Activated T-helper 2 cell treated with anti-CD3 and anti-CD28 coated beads, Interferon-gamma antibody, Interleukin-2, Interleukin-4, amounts not matched to agents 10 μg/mL and 5 μg/mL and 100 μg/mL, durations not matched to agents 14 hours and 24 hours and 36 hours (primary cell): ENCODE measurements at regions of chr9 and their contacts with region 1.

Region 1: DNA sequence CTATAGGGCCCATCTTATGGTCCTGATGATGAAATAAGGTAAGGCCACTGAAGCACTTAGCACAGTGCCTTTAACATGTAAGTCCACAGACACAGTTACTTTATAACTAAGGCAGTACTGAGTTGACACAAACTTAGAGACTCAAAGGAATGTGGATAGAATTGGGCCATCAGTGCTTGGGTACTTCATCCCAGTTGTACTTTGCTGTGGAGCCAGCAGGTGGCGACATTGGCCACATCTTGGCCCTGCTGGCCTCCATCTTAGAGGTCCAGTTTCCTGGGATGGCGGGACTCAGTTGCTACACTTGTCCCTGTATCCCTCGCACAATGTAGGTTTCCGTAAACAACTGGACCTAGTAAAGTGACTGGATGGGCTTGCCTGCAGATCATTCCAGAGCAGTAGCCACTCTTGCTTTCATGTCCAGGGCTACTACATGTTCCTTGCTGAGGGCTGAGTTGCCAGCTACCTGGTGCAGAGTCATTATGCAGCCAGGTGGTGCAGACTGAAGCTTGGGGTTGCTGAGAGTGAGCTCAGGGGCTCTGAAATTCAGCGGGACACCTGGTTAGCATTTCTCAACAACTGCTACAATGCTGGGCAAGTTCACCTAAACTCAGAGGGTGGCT is 10.6 kb downstream of the MTAP start:
- DNase-seq: peak; percentile 49
- H3K4me3 Mint-ChIP-seq: no peak overlapping the region
- H3K27ac Mint-ChIP-seq: no peak overlapping the region
- H3K4me1 Mint-ChIP-seq: peaks cover 39% of the 10 kb centered on the region
- H3K27me3 Mint-ChIP-seq: no peaks in the 10 kb centered on the region

Region 2: DNA sequence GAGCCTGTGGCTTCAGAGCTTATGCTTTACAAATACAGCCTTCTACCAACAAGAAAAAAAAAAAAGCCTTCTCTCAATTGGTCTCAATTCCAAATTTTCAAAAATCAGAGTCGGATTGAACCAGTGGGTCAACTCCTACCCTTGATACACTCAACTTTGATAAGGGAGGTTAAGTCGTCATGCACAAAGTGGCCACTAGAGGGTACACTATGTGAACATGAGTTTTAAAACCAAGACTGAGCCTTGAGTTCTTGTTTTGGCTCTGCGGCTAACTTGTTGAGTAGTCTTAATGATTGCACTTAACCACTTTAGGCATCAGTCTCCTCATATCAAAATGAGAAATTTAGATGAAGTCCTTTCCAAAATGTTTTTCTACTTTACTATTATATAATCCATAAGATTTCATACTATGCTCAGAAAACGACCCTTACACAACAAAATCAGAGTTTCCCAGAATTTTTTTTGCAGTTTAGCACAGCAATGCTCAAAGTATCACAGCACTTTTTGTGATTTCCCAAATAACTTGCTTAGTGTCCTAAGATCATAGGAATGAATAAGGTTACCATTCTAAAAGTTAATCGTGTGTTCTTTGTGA is 103.5 kb before region 1 on chr9:
- intact Hi-C with region 1: no loop called
- DNase-seq: peak; percentile 41
- H3K4me3 Mint-ChIP-seq: no peak overlapping the region
- H3K27ac Mint-ChIP-seq: no peak overlapping the region
- H3K4me1 Mint-ChIP-seq: peaks cover 4% of the 10 kb centered on the region
- H3K27me3 Mint-ChIP-seq: peaks cover 24% of the 10 kb centered on the region

Region 3: GRCh38 chr9:21965401-21965951 is 152.4 kb after region 1 on chr9:
- intact Hi-C with region 1: loop called (anchors 1 kb)
- DNase-seq: peak; percentile 44
- H3K4me3 Mint-ChIP-seq: peak overlapping the region; percentile 63
- H3K27ac Mint-ChIP-seq: no peak overlapping the region
- H3K4me1 Mint-ChIP-seq: peaks cover 25% of the 10 kb centered on the region
- H3K27me3 Mint-ChIP-seq: peaks cover 87% of the 10 kb centered on the region

Region 4: DNA sequence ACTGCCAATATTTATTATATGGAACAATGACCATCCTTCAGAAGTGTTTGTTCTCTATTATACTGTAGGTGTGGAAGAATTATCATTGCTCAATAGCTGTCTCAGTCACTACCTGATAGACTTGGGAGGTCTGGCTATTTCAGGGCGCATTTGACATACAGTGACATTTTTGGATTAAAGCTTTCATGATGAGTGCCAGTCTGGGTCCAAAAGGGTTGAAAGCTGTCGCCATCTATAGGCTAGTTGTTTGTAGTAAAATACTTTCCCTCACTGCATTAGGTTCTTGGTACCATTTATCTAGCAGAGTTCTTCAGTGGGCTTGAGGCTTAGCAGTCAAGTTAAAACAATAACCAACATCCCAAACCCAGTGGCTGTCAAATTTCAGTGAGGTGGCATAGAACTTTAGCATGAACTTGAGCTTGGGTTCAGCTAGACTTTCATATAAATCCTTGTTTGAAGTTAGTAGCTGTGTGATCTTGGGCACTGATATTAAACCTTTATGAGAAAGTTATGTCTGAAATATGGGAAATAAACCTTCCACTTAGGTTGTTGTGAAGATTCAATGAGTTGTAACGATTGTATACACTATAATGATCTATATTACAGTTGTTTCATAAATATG is 306.6 kb after region 1 on chr9:
- intact Hi-C with region 1: loop called (anchors 1 kb)
- DNase-seq: no peak
- H3K4me3 Mint-ChIP-seq: no peak overlapping the region
- H3K27ac Mint-ChIP-seq: no peak overlapping the region
- H3K4me1 Mint-ChIP-seq: peaks cover 16% of the 10 kb centered on the region
- H3K27me3 Mint-ChIP-seq: peaks cover 68% of the 10 kb centered on the region

Region 5: DNA sequence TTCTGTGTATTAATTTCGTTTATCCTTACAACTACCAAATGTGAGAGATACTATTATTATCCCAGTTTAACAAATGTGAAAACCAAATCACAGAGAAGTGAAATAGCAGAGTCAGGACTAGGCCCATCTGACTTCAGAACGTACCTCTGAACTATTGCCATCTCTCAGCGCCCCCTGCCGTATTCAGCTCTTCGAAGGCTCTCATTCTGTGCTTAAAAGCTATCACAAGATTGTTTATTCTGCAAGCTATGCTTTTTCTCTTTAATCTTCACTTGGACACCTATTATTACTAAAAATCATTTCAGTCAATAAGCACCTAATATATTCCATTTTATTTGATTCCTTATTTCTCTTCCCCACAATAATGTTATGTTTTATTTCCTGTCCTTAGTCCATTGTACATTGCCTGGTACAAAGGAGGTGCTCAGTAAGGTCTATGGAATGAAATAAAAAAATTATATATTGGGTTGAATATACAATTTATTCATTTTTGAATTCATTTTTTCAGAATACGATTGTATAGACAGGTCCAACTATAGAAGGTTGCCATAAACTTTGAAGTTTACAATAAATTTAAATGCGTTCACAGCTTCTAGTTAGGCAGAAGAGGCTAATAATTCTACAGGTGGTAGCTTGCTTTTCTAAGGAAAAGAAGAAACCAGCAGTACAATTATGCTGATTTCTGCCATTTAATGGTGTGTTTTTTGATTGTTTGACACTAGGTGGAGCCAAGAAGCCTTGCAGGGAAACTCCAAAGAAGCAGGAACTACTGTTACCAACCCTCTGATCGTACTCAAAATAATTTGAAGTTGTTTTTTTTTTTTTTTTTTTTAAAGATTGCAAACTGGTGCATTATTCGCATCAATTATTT is 431.3 kb after region 1 on chr9:
- intact Hi-C with region 1: loop called (anchors 1 kb)
- DNase-seq: no peak
- H3K4me3 Mint-ChIP-seq: no peak overlapping the region
- H3K27ac Mint-ChIP-seq: no peak overlapping the region
- H3K4me1 Mint-ChIP-seq: peaks cover 26% of the 10 kb centered on the region
- H3K27me3 Mint-ChIP-seq: peaks cover 50% of the 10 kb centered on the region